CD8-positive, alpha-beta T cell (primary cell): ENCODE measurements at regions of chr4 and their contacts with region 1.

Region 1: DNA sequence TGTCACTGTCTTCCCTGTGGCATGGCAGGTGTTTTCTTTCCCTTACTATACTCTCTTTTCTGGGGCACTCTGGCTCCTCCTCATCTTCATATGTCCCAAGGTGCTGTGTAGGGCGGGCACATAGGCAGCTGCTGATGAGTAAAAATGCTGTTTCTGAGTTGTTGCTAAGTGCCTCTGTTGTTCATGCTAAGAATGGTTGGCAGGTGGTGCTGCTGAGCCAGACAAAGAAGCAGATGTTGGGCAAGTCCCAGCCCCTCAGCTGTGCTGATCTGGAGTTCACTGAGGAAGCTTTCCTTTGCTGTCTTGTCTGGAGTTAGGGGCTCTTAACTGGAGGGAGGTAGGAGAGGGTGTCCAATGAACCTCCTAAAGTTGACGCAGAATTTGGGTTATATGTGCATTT is 40.6 kb downstream of the HADH start:
- DNase-seq: peak; percentile 43 to 87 (median 73)
- ATAC-seq: peak; percentile 84
- H3K4me3 ChIP-seq: no peak overlapping the region
- H3K4me3 Mint-ChIP-seq: peak overlapping the region; percentile 60
- H3K27ac ChIP-seq: peak overlapping the region; percentile 24 to 55
- H3K27ac Mint-ChIP-seq: peak overlapping the region; percentile 92
- H3K4me1 ChIP-seq: peaks cover 63% of the 10 kb centered on the region
- H3K4me1 Mint-ChIP-seq: peaks cover 64% of the 10 kb centered on the region
- H3K27me3 ChIP-seq: no peaks in the 10 kb centered on the region
- H3K27me3 Mint-ChIP-seq: no peaks in the 10 kb centered on the region
- CTCF ChIP-seq: peak; percentile 75

Region 2: GRCh38 chr4:108045694-108046038 is 15.3 kb after region 1 on chr4:
- CTCF ChIA-PET with region 1: interaction called, 14 read pairs
- POLR2A ChIA-PET with region 1: interaction called, 11 read pairs
- intact Hi-C with region 1: loop called in 1 of 2 experiments (anchors 1 kb)
- DNase-seq: peak in 3 of 9 experiments; percentile 36 to 69 (median 50)
- ATAC-seq: peak; percentile 27
- H3K4me3 ChIP-seq: no peak overlapping the region
- H3K4me3 Mint-ChIP-seq: no peak overlapping the region
- H3K27ac ChIP-seq: peak overlapping the region; percentile 16 to 17
- H3K27ac Mint-ChIP-seq: peak overlapping the region; percentile 81
- H3K4me1 ChIP-seq: peaks cover 69% of the 10 kb centered on the region
- H3K4me1 Mint-ChIP-seq: peaks cover 66% of the 10 kb centered on the region
- H3K27me3 ChIP-seq: no peaks in the 10 kb centered on the region
- H3K27me3 Mint-ChIP-seq: no peaks in the 10 kb centered on the region
- CTCF ChIP-seq: no peak

Region 3: GRCh38 chr4:108072300-108072699 is 42.0 kb after region 1 on chr4:
- CTCF ChIA-PET with region 1: interaction called, 10 read pairs
- POLR2A ChIA-PET with region 1: interaction called, 4 read pairs
- intact Hi-C with region 1: loop called in 1 of 2 experiments (anchors 5 kb)
- DNase-seq: peak; percentile 37 to 93 (median 77)
- ATAC-seq: peak; percentile 87
- H3K4me3 ChIP-seq: peak overlapping the region in 1 of 2 experiments; percentile 20
- H3K4me3 Mint-ChIP-seq: peak overlapping the region; percentile 60
- H3K27ac ChIP-seq: peak overlapping the region; percentile 67 to 76
- H3K27ac Mint-ChIP-seq: peak overlapping the region; percentile 97
- H3K4me1 ChIP-seq: peaks cover 58% of the 10 kb centered on the region
- H3K4me1 Mint-ChIP-seq: peaks cover 74% of the 10 kb centered on the region
- H3K27me3 ChIP-seq: no peaks in the 10 kb centered on the region
- H3K27me3 Mint-ChIP-seq: no peaks in the 10 kb centered on the region
- CTCF ChIP-seq: no peak

Region 4: GRCh38 chr4:108118490-108118889 is 88.2 kb after region 1 on chr4:
- CTCF ChIA-PET with region 1: interaction called, 8 read pairs
- POLR2A ChIA-PET with region 1: interaction called, 5 read pairs
- intact Hi-C with region 1: loop called (anchors 5 to 10 kb)
- DNase-seq: peak in 4 of 9 experiments; percentile 33 to 67 (median 54)
- ATAC-seq: peak; percentile 58
- H3K4me3 ChIP-seq: no peak overlapping the region
- H3K4me3 Mint-ChIP-seq: peak overlapping the region; percentile 60
- H3K27ac ChIP-seq: peak overlapping the region in 1 of 2 experiments; percentile 41
- H3K27ac Mint-ChIP-seq: peak overlapping the region; percentile 98
- H3K4me1 ChIP-seq: peaks cover 98% of the 10 kb centered on the region
- H3K4me1 Mint-ChIP-seq: peaks cover 90% of the 10 kb centered on the region
- H3K27me3 ChIP-seq: no peaks in the 10 kb centered on the region
- H3K27me3 Mint-ChIP-seq: no peaks in the 10 kb centered on the region
- CTCF ChIP-seq: no peak

Region 5: DNA sequence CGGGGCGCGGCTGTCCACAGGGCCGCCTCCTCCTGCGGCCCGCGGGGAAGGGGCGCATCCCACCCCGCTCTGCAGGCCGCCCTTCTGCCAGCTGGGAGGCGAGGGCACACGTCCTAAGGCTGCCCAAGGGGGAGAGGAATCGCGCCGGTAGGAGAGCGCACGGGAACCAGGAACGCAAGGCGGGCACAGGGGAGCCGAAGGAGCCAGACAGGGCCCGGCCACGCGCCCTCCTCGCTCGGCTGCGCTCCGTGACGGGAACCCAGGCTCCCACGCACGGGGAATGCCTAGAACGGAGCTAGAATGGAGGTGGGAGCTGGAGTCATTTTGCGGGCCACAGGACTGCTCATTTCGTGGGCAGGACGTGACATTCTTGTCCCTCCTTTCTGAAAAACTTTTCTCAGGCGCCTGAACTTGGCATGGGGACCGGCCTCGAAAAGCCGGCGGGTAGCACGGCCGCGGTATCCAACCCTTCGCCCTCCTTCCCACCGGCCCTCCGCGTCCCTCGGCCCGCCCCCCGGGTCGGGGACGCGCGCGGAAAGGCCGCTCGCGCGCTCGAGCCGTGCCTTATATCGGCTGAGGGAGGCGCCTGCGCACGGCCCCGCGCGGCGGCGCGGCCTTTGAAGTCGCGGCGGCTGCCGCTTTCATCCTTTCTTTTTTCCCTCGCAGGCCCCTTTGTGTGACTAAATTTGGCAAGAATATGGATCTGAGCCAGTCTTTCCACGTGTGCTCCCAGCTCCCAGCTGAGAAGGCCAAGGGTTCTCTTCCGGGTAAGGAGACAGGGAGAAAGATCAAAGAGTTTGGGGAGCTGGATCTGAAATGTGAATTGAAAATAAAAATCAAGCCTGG is 142.6 kb after region 1 on chr4:
- CTCF ChIA-PET with region 1: interaction called, 11 read pairs
- POLR2A ChIA-PET with region 1: interaction called, 10 read pairs
- intact Hi-C with region 1: loop called (anchors 2 kb)
- DNase-seq: peak; percentile 39 to 85 (median 72)
- ATAC-seq: peak; percentile 46
- H3K4me3 ChIP-seq: peak overlapping the region; percentile 71 to 82
- H3K4me3 Mint-ChIP-seq: peak overlapping the region; percentile 92
- H3K27ac ChIP-seq: peak overlapping the region; percentile 48 to 71
- H3K27ac Mint-ChIP-seq: peak overlapping the region; percentile 93
- H3K4me1 ChIP-seq: peaks cover 39% of the 10 kb centered on the region
- H3K4me1 Mint-ChIP-seq: peaks cover 58% of the 10 kb centered on the region
- H3K27me3 ChIP-seq: peaks cover 0 to 26% of the 10 kb centered on the region in 2 experiments
- H3K27me3 Mint-ChIP-seq: peaks cover 3% of the 10 kb centered on the region
- CTCF ChIP-seq: no peak

Region 6: DNA sequence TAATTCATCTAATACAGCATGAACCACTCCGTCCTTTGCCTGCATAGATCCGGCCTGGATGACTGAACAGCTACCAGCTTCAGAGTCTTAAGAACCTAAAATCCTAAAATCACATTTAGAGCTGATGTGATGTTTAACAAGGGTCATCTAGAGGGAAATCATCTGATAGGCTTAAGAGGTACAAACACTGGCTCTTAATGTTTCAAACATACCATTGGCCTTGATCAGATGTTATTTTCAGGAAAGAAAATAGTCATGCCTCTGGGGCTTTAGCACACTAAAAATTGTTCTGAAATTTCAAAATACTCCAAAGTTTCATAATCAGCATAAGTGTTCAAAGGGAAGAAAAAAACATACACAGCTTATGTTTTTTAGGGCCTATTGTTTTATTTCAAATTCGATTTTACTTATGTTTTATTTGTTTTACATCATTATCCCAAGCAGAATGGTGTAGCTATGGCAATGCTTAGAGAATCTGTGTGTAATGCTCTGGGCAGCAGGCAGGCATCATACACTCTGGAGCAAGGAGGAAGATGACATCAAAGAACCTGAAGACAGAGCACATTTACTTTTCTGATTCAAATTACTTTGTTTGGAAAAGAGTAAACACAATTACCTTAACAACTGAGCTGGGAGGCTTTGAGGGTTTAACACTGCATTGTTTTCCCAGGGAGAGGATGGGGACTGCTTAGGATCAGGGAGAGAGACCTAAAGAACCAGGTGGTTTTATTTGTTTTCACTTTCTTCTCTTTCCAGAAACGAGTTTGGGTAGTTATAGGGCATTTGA is 163.7 kb after region 1 on chr4:
- CTCF ChIA-PET with region 1: no interaction called
- POLR2A ChIA-PET with region 1: no interaction called
- intact Hi-C with region 1: no loop called
- DNase-seq: no peak
- ATAC-seq: no peak
- H3K4me3 ChIP-seq: no peak overlapping the region
- H3K4me3 Mint-ChIP-seq: no peak overlapping the region
- H3K27ac ChIP-seq: no peak overlapping the region
- H3K27ac Mint-ChIP-seq: no peak overlapping the region
- H3K4me1 ChIP-seq: no peaks in the 10 kb centered on the region
- H3K4me1 Mint-ChIP-seq: peaks cover 21% of the 10 kb centered on the region
- H3K27me3 ChIP-seq: no peaks in the 10 kb centered on the region
- H3K27me3 Mint-ChIP-seq: no peaks in the 10 kb centered on the region
- CTCF ChIP-seq: no peak

Region 7: DNA sequence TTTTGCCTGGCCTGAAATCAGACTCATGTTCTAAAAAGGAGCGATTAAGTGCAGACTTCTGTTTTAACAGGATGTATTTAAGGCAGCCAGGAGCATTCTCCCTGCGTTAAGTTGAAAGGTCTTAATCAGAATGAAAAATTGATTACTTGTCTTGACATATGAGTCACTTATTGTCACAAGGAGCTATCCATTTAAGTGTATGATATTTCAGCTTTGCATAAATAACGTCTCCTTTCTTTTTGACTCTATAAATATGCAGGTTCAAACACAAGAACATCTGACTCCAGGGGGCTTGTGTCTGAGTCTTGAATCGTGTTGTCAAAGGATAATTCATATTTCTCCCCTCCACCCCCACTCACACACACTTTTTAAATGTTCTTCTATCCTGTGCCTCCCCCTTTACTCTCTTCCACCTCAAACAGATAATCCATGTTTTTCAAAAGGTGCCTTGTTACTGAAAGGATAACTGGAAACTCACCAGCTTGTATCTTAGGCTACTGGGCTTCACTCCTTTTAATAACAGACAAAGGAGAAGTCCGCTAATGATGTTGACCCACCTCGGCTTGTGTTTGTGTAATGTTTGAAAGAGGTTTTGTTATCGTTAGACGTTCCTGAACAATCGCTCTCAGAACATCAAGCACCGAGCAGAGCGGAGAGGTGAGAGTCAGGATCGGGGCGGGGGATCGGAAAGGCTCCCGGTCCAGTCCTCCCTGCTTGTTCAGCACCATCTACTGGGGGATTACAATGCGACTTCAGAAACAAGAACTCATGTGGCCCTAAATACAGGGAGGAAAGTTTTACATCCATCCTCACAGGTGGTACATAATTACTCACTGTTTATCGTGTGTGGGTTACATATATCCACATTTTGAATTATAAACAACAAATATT is 482.5 kb after region 1 on chr4:
- CTCF ChIA-PET with region 1: interaction called, 17 read pairs
- POLR2A ChIA-PET with region 1: no interaction called
- intact Hi-C with region 1: loop called (anchors 1 to 5 kb)
- DNase-seq: peak in 8 of 9 experiments; percentile 18 to 71 (median 54)
- ATAC-seq: peak; percentile 93
- H3K4me3 ChIP-seq: peak overlapping the region in 1 of 2 experiments; percentile 17
- H3K4me3 Mint-ChIP-seq: peak overlapping the region; percentile 82
- H3K27ac ChIP-seq: no peak overlapping the region
- H3K27ac Mint-ChIP-seq: peak overlapping the region; percentile 57
- H3K4me1 ChIP-seq: peaks cover 16% of the 10 kb centered on the region
- H3K4me1 Mint-ChIP-seq: peaks cover 29% of the 10 kb centered on the region
- H3K27me3 ChIP-seq: no peaks in the 10 kb centered on the region
- H3K27me3 Mint-ChIP-seq: no peaks in the 10 kb centered on the region
- CTCF ChIP-seq: peak; percentile 53